ENCODE measurements at regions of chr19 and their contacts with region 1.

Region 1: GRCh38 chr19:2021453-2022140 is 6.1 kb upstream of the BTBD2 start:
- DNase-seq: no peak
- H3K4me3 ChIP-seq: no peak overlapping the region
- H3K27ac ChIP-seq: no peak overlapping the region
- H3K4me1 ChIP-seq: peaks cover under 1 to 18% (median under 1%) of the 10 kb centered on the region in 3 donors
- H3K27me3 ChIP-seq: no peaks in the 10 kb centered on the region
- CTCF ChIP-seq: no peak
- POLR2A ChIP-seq: no peak

Region 2: DNA sequence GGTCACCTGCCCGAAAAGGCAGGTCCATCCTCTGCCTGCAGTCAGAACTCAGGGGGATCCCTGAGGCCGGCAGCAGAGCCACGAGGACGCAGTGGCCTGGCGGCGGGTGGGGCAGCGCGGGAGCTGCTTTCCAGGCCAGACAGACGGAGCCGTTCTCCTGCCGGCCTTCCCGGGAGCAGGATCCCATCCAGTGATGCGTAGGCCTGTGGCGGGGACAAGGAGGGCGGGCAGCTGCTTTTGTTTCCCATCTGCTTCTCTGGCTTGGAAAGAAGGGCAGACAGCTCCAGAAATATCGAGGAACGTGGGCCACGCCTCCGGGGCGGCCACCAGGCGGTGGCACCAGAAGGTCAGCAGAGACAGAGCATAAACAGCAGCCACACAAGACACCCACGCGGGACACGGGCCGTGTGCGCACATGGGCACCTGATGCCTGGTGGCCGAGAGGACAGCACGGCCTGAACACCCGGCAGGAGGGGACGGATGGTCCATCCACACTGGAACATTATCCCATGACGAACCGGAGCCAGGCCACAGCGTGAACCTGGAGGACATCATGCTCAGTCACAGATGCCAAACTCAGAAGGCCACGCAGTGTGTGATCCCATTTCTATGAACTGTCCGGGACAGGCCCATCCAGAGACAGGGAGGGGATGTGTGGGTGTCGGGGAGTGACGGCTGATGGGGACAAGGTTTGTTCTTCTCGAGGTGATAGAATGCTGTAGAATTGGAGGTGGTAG is 43.4 kb after region 1 on chr19:
- intact Hi-C with region 1: loop called (anchors 5 kb)
- DNase-seq: no peak
- H3K4me3 ChIP-seq: no peak overlapping the region
- H3K27ac ChIP-seq: peak overlapping the region in 3 of 4 donors; percentile 65 to 80 (median 80)
- H3K4me1 ChIP-seq: peaks cover 16 to 59% (median 21%) of the 10 kb centered on the region in 3 donors
- H3K27me3 ChIP-seq: no peaks in the 10 kb centered on the region
- CTCF ChIP-seq: no peak
- POLR2A ChIP-seq: no peak

Region 3: DNA sequence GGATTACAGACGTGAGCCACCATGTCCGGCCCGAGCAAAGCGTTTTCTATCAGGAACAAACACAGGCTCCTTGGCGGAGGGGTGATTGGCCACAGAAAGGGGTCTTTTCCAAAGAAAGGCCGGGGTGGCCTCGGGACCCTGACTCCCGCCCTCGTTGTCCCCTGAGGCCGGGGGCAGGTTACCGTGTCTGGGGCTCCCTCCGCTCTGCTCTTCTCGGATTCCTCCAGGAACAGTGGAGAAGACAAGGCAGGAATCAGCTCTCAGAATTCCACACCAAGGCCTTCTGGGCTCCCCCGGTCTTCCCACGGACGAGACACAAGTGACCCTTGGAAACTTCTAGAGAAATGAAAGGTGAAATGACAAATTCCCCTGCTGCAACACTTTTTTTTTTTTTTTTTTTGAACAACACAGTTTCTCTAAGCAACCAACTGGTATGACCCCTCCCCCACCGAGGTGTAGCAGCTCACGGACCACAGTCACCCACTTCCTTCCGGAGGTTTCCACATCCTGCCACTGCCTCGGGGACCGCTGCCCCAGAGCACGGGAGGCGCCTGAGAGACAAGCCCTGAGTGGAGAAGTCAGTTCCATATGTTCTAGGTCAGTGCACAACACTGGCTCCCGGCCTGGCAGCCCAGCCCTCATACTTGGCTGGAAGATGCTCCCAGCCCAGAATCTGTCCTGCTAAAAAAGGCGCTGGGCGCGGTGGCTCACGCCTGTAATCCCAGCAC is 63.6 kb after region 1 on chr19:
- intact Hi-C with region 1: no loop called
- DNase-seq: peak; percentile 77
- H3K4me3 ChIP-seq: peak overlapping the region; percentile 0 to 55 (median 29)
- H3K27ac ChIP-seq: peak overlapping the region; percentile 74 to 99 (median 89)
- H3K4me1 ChIP-seq: peaks cover 53 to 100% (median 72%) of the 10 kb centered on the region in 3 donors
- H3K27me3 ChIP-seq: no peaks in the 10 kb centered on the region
- CTCF ChIP-seq: no peak
- POLR2A ChIP-seq: peak in 1 of 4 donors; percentile 40